ENCODE measurements at regions of chr5 and their contacts with region 1.

Region 1: DNA sequence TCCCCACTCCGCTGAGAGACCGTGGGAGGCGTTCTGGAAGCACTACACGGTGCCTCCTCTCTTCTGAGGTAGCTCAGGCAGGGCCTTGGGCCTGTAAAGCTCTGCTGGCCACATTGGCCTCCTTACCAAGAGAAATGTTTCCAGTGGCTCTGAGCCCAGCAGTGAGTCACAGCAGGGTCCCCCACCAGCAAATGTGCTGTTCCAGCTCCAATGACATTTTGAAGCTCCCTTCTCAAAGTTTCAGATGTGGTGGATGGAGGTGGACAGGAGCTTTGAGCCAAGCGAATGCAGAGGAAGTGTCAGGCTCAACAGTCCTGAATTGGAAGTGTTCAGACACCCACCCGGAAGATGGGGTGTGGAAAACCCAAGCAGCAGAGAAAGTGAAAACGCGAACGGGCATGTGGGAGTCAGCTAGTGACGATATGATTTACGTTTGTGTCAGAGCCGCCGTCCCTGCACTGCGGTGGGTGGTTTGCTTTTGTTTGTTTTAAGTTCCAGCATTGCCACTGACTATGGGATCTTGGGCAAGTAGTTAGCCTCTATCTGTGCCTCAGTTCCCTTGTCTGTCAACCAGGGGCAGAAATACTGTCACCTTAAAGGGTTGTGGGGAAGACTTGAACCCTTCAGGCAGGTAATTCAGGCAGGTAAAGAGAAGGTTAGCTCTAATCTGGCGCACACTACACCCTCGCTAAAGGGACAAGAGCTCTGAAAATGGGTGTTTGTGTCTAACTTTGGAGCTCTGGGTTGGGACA is 38.2 kb downstream of the C5orf15 start:
- DNase-seq: no peak
- ATAC-seq: peak; percentile 42
- H3K4me3 ChIP-seq: peak overlapping the region; percentile 38; the same call in 1 of the 2 replicates
- H3K27ac ChIP-seq: peak overlapping the region; percentile 52
- H3K4me1 ChIP-seq: peaks cover 60% of the 10 kb centered on the region
- H3K27me3 ChIP-seq: no peaks in the 10 kb centered on the region
- CTCF ChIP-seq: no peak
- EP300 ChIP-seq: peak in 1 of 2 experiments; percentile 12; a peak in 1 of 4 replicates
- POLR2A ChIP-seq: peak; percentile 62
- RAD21 ChIP-seq: no peak

Region 2: GRCh38 chr5:132487841-132488555 is 1442.2 kb before region 1 on chr5:
- CTCF ChIA-PET with region 1: no interaction called
- POLR2A ChIA-PET with region 1: no interaction called
- RAD21 ChIA-PET with region 1: no interaction called
- SMC1A ChIA-PET with region 1: no interaction called
- in situ Hi-C with region 1: no loop called
- intact Hi-C with region 1: no loop called
- DNase-seq: no peak
- ATAC-seq: peak; percentile 13
- H3K4me3 ChIP-seq: peak overlapping the region; percentile 98
- H3K27ac ChIP-seq: peak overlapping the region; percentile 97
- H3K4me1 ChIP-seq: peaks cover 43% of the 10 kb centered on the region
- H3K27me3 ChIP-seq: no peaks in the 10 kb centered on the region
- CTCF ChIP-seq: no peak; a peak in 1 of 6 replicates
- EP300 ChIP-seq: no peak
- POLR2A ChIP-seq: peak; percentile 62
- RAD21 ChIP-seq: peak; percentile 16; the same call in 1 of the 2 replicates

Region 3: DNA sequence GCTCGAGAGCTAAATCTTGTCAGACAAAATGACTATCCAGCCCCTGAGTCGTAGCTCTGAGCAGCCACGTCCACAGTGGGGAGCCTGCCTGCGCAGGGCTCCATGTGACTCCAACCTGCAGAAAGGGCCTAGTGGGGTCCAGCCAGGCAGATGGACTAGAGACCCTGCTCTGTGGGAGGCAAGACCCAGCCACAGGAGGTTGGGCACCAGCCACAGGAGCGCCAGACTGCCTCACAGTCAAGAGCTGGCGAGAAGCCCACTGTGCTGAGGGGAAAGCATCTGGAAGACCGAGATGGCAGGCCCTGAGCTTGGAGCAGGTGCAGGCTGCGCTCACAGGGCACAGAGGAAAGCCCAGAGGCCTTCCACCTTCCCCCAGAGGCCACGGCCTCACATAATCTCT is 23.2 kb before region 1 on chr5:
- CTCF ChIA-PET with region 1: interaction called, 3 read pairs
- POLR2A ChIA-PET with region 1: no interaction called
- RAD21 ChIA-PET with region 1: interaction called, 3 read pairs
- SMC1A ChIA-PET with region 1: interaction called, 4 read pairs
- in situ Hi-C with region 1: no loop called
- intact Hi-C with region 1: loop called (anchors 2 kb)
- DNase-seq: no peak
- ATAC-seq: no peak
- H3K4me3 ChIP-seq: no peak overlapping the region
- H3K27ac ChIP-seq: no peak overlapping the region
- H3K4me1 ChIP-seq: no peaks in the 10 kb centered on the region
- H3K27me3 ChIP-seq: no peaks in the 10 kb centered on the region; a peak in 2 of 4 replicates
- CTCF ChIP-seq: no peak
- EP300 ChIP-seq: no peak
- POLR2A ChIP-seq: no peak
- RAD21 ChIP-seq: no peak

Region 4: DNA sequence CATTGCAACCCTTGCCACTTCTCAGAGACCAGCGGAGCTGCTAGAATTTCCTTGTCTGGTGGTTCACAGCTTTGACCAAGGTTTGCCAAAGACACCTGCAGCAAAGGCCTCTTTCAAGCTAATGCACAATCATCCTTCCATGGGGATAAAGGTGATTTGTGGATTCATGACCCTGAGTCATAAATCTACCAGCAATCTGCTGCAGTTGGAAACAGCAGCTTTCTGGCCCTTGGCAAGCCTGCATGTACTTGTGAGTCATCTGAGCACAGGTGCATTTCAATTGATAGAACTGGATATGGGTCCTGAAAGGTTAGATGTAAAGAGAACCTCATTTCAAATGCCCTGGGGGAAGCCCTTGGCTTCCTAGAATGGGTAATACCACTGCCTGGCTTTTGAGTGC is 162.6 kb after region 1 on chr5:
- CTCF ChIA-PET with region 1: no interaction called
- POLR2A ChIA-PET with region 1: no interaction called
- RAD21 ChIA-PET with region 1: no interaction called
- SMC1A ChIA-PET with region 1: no interaction called
- in situ Hi-C with region 1: no loop called
- intact Hi-C with region 1: no loop called
- DNase-seq: no peak
- ATAC-seq: no peak
- H3K4me3 ChIP-seq: no peak overlapping the region
- H3K27ac ChIP-seq: no peak overlapping the region
- H3K4me1 ChIP-seq: peaks cover 13% of the 10 kb centered on the region
- H3K27me3 ChIP-seq: no peaks in the 10 kb centered on the region
- CTCF ChIP-seq: no peak
- EP300 ChIP-seq: no peak
- POLR2A ChIP-seq: no peak
- RAD21 ChIP-seq: no peak